Breast epithelium (tissue), 4 donors: ENCODE measurements at regions of chr19 and their contacts with region 1.

Region 1: DNA sequence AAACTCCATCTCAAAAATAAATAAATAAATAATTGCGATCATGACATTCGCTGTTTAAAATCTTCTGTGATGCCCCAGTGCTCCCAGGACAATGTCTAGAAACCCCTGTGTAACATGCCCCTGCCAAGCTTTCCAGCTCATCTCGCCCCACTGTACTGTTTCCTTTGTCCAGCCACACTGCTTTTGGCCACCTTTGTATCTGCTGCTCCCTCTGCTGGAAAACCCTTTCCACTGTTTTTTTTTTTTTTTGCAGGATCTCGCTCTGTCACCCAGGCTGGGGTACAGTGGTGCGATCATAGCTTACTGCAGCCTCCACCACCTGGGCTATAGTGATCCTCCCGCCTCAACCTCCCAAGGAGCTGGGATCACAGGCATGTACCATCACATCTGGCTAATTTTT is 7.5 kb downstream of the PLAUR start:
- DNase-seq: no peak
- H3K4me3 ChIP-seq: no peak overlapping the region
- H3K27ac ChIP-seq: no peak overlapping the region
- H3K4me1 ChIP-seq: no peaks in the 10 kb centered on the region
- H3K27me3 ChIP-seq: no peaks in the 10 kb centered on the region
- CTCF ChIP-seq: no peak
- POLR2A ChIP-seq: no peak

Region 2: GRCh38 chr19:42075616-42076379 is 1586.7 kb before region 1 on chr19 and contains the start of gene ZNF574:
- intact Hi-C with region 1: loop called (anchors 5 kb)
- DNase-seq: peak; percentile 98 to 99
- H3K4me3 ChIP-seq: peak within 1 kb of the TSS; percentile 72 to 100 (median 76)
- H3K27ac ChIP-seq: peak within 1 kb of the TSS; percentile 98 to 99
- H3K4me1 ChIP-seq: peaks cover 6 to 8% of the 10 kb centered on the region in 2 donors
- H3K27me3 ChIP-seq: no peaks in the 10 kb centered on the region
- CTCF ChIP-seq: peak in 1 of 3 donors; percentile 22
- POLR2A ChIP-seq: peak; percentile 89
- total RNA-seq, gene ZNF574: 13.8 to 19.2 (median 15.1) TPM

Region 3: DNA sequence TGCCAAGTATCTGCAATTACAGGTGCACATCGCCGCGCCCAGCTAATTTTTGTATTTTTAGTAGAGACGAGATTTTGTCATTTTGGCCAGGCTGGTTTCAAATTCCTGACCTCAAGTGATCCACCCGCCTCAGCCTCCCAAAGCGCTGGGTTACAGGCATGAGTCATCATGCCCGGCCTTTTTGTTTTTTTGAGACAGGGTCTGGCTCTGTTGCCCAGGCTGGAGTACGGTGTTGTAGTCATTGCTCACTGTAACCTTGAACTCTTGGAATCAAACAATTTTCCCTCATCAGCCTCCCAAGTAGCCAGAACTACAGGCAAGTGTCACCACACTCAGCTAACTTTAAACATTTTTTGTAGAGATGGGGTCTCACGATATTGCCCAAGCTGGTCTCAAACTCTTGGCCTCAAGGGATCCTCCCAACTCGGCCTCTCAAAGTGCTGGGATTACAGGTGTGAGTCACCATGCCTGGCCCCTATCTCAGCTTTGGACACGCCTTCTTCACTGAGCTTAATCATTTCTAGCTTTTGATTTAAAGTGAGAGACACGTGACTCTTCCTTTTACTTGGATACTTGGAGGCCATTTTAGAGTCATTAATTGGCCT is 49.4 kb after region 1 on chr19:
- intact Hi-C with region 1: no loop called
- DNase-seq: no peak
- H3K4me3 ChIP-seq: no peak overlapping the region
- H3K27ac ChIP-seq: no peak overlapping the region
- H3K4me1 ChIP-seq: no peaks in the 10 kb centered on the region
- H3K27me3 ChIP-seq: no peaks in the 10 kb centered on the region
- CTCF ChIP-seq: no peak
- POLR2A ChIP-seq: no peak